Transverse colon (tissue), 4 donors: ENCODE measurements at regions of chr4 and their contacts with region 1.

Region 1: DNA sequence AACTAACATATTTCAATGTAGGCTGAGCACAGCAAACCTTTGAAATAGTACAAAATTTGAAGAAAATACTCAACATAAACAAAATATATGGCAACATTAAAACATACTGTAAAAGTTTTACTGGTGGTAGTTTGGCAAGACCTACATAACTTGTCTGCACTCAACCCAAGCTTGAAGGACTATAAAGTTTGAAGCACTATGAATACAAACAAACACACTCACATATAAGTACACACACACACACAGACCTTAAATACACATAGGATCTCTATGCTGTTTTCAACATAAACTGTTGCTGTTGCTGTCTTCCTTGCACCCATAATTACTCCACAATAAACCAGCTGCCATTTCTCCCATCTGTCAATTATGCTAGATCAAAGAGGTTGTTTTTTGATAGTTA is 589.6 kb downstream of the IL15 start:
- DNase-seq: no peak
- H3K4me3 ChIP-seq: no peak overlapping the region
- H3K27ac ChIP-seq: no peak overlapping the region
- H3K4me1 ChIP-seq: no peaks in the 10 kb centered on the region
- H3K27me3 ChIP-seq: no peaks in the 10 kb centered on the region
- CTCF ChIP-seq: no peak
- EP300 ChIP-seq: no peak
- POLR2A ChIP-seq: no peak

Region 2: GRCh38 chr4:142194905-142195304 is 31.1 kb before region 1 on chr4:
- in situ Hi-C with region 1: no loop called
- intact Hi-C with region 1: loop called (anchors 1 kb)
- DNase-seq: no peak
- H3K4me3 ChIP-seq: no peak overlapping the region
- H3K27ac ChIP-seq: no peak overlapping the region
- H3K4me1 ChIP-seq: no peaks in the 10 kb centered on the region
- H3K27me3 ChIP-seq: no peaks in the 10 kb centered on the region
- CTCF ChIP-seq: no peak
- EP300 ChIP-seq: no peak
- POLR2A ChIP-seq: no peak